GM18951 (cell line): ENCODE measurements at regions of chr2 and their contacts with region 1.

Region 1: DNA sequence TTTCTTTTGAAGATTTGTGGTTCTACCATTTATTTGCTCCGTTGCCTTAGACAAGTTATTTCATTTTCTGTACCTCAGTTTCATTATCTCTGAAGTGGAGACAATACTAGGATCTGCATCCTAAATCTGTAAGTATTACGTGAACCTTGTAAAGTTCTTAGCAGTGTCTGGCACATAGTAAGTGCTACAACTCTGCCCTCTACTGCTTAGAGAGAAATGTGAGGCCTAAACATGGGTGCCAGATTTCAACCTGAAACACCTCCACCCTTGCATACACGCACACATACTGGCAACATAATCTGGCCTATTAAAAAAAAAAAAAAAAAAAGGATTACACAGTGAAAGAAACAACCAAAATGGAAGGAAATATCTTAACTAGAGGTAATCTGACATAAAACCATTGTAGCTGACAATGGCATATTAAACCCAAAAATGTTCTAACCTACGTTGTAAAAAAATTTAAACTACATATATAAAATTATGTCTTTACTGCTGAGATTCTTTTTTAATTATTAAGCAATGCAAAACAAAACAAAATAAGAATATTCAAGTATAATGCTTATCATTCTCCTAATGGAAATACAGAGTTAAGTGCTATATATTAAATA is 132.6 kb downstream of the MAP2 start:
- POLR2A ChIP-seq: no peak

Region 2: GRCh38 chr2:209121691-209122090 is 434.8 kb before region 1 on chr2:
- in situ Hi-C with region 1: no loop called
- POLR2A ChIP-seq: no peak

Region 3: DNA sequence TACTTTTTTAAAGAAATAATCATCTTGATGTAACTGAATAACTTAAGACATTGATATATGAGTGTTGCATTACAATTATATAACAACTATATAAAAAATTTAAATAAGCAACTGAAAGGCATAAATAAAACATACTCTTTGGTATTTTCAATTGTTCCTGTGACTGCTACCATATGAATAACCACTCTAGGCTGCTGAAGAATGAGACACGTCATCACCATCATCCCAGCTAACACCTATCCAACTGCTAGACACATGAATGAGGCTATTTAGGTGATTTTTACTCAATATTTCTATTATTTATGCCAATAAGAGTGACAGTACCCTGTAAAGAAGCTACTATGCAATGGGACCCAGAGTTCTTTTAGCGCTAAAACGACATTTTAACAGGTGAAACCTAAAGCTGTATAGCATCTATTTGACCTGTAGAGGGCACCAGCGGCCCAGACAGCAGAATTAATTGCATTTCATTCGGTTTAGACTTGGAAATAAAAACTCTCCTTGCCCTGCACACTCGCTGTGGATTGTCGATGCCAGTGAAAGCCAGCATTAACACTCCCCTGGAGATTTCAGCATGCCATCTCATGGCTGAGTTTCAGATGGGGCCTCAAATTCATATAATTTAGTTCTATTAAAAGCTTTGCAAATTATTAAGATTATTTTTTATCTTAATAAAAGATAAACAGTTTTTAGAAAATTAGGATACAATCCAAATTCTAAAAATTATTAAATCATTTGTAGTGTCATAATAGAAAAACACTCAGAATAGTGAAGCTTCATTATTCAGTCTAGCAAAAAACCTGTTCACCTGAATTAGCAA is 222.1 kb before region 1 on chr2:
- in situ Hi-C with region 1: loop called (anchors 25 kb)
- POLR2A ChIP-seq: no peak